ENCODE measurements at regions of chr3 and their contacts with region 1.

Region 1: DNA sequence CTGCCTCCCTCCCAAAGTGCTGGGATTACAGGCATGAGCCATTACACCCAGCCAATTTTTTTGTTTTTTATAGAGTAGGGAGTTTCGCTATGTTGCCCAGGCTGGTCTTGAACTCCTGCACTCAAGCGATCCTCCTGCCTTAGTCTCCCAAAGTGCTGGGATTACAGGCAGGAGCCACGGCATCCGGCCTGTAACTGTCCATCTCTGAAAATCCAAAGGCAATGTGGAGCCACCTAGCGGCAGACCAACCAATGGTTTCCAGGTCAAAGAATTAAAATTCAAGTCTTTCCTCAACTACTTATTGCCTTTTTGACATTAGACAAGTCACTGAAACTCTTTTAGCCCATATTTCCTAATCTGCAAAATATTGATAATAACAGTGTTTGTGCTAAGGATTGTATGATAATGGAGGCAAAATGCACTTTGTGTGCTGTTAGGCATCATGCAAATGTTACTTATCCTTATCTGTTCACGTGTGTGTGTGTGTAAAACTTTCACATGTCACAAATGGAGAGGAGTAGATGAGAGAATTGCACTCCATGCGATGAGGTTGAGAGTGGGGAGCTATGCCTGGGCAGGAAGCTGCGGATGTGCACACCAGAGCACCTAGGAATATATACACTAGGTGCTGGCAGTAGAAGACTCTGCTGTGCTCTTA is 48.7 kb downstream of the COL8A1 start:
- DNase-seq: peak; percentile 23
- ATAC-seq: peak; percentile 85
- H3K4me3 ChIP-seq: no peak overlapping the region
- H3K27ac ChIP-seq: no peak overlapping the region
- H3K4me1 ChIP-seq: no peaks in the 10 kb centered on the region
- H3K27me3 ChIP-seq: no peaks in the 10 kb centered on the region
- CTCF ChIP-seq: peak; percentile 70
- EP300 ChIP-seq: no peak
- POLR2A ChIP-seq: no peak
- RAD21 ChIP-seq: no peak

Region 2: GRCh38 chr3:99023590-99024192 is 663.4 kb before region 1 on chr3:
- CTCF ChIA-PET with region 1: no interaction called
- POLR2A ChIA-PET with region 1: no interaction called
- in situ Hi-C with region 1: no loop called
- intact Hi-C with region 1: loop called (anchors 1 kb)
- DNase-seq: peak; percentile 3
- ATAC-seq: no peak
- H3K4me3 ChIP-seq: no peak overlapping the region
- H3K27ac ChIP-seq: no peak overlapping the region
- H3K4me1 ChIP-seq: no peaks in the 10 kb centered on the region
- H3K27me3 ChIP-seq: no peaks in the 10 kb centered on the region
- CTCF ChIP-seq: peak; percentile 63
- EP300 ChIP-seq: no peak
- POLR2A ChIP-seq: no peak
- RAD21 ChIP-seq: no peak

Region 3: DNA sequence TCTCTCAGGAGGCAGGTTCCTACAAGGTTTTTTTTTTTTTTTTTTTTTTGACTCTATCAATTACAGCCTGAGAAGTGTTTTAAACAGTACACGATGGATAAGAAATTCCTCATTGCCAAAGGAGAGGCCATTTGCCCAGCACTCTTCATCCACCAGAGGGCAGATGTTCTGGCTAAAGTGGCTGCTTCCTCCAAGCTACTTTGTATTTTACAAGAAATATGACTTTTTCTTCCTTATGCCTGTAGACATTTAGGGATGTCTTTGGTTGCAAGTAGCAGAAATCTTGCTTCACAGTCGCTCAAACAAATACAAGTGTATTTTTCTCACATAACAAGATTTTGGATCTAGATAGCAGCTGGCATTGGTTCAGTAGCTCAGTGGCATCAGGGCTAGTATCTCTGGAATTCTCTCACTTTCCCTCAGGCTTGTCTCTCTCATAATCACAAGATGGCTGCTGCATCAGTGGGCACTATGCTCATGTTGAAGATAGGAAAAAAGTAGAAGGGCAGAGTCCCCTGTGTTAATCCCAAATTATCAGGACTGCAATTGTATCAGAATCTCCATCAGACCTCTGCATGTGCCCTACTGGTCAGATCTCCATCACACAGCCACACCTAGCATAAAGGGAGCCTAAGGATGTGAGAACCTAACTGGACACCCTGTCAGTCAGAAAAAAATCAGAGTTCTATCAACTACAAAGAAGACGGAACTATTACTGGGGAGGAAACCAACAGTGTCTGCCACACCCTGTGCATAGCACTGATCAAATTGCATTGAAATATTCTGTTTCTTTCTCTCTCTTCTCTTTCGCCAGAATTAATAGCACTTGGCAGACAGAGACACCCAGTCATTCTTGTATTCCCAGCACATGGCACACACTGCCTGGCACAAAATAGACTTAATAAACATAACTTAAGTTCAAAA is 187.6 kb before region 1 on chr3:
- CTCF ChIA-PET with region 1: interaction called, 10 read pairs
- POLR2A ChIA-PET with region 1: no interaction called
- in situ Hi-C with region 1: no loop called
- intact Hi-C with region 1: loop called (anchors 1 kb)
- DNase-seq: peak; percentile 6
- ATAC-seq: peak; percentile 88
- H3K4me3 ChIP-seq: no peak overlapping the region
- H3K27ac ChIP-seq: no peak overlapping the region
- H3K4me1 ChIP-seq: no peaks in the 10 kb centered on the region
- H3K27me3 ChIP-seq: no peaks in the 10 kb centered on the region
- CTCF ChIP-seq: peak; percentile 60
- EP300 ChIP-seq: no peak
- POLR2A ChIP-seq: no peak
- RAD21 ChIP-seq: no peak

Region 4: GRCh38 chr3:99645277-99646106 is 41.6 kb before region 1 on chr3:
- CTCF ChIA-PET with region 1: interaction called, 5 read pairs
- POLR2A ChIA-PET with region 1: no interaction called
- in situ Hi-C with region 1: no loop called
- intact Hi-C with region 1: loop called (anchors 2 kb)
- DNase-seq: peak; percentile 16
- ATAC-seq: peak; percentile 72
- H3K4me3 ChIP-seq: no peak overlapping the region
- H3K27ac ChIP-seq: no peak overlapping the region
- H3K4me1 ChIP-seq: no peaks in the 10 kb centered on the region
- H3K27me3 ChIP-seq: no peaks in the 10 kb centered on the region; a peak in 1 of 5 replicates
- CTCF ChIP-seq: peak; percentile 57
- EP300 ChIP-seq: no peak
- POLR2A ChIP-seq: no peak
- RAD21 ChIP-seq: no peak